ENCODE measurements at regions of chr14 and their contacts with region 1.

Region 1: GRCh38 chr14:77542421-77543239 is 44.0 kb upstream of the ISM2 start:
- DNase-seq: no peak
- ATAC-seq: peak in 7 of 8 donors; percentile 49 to 72 (median 67)
- H3K4me3 ChIP-seq: no peak overlapping the region
- H3K27ac ChIP-seq: peak overlapping the region in 7 of 10 donors; percentile 27 to 73 (median 46)
- H3K4me1 ChIP-seq: peaks cover 0 to 34% (median 15%) of the 10 kb centered on the region in 9 donors
- H3K27me3 ChIP-seq: no peaks in the 10 kb centered on the region
- CTCF ChIP-seq: no peak

Region 2: DNA sequence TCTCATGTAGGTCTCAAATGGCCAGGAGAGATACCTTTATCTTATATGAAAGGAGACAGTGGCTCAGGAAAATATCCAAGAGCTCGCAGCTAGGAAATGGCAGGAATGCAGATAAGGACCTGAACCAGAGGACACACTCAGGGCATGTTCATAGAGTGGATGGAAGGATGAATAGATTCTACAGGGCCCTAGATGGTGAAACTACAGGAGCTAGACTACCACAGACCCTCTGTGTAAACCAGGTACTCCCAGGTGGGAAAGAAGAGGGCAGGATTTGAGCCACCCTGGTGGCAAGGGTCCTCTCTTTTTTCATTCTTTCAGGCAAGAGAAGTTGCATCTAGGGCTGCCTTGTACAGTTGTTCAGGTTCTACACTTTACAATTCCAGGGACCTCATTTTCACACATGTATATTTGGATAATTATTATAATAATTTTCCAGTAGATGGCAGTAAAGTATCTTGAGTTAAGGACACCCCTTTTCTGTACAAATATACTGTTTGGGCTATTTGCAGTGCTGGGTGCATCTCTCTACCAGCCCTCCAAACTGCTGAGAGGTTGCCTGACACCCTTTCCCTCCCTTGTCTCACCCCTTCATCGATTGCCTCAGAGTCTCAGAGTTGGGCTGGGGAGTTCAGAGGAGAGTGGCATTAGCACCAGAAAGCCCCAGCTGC is 390.6 kb before region 1 on chr14:
- intact Hi-C with region 1: loop called in 1 of 10 experiments (anchors 10 kb)
- DNase-seq: no peak
- ATAC-seq: peak in 4 of 8 donors; percentile 25 to 57 (median 45)
- H3K4me3 ChIP-seq: no peak overlapping the region
- H3K27ac ChIP-seq: no peak overlapping the region
- H3K4me1 ChIP-seq: peaks cover 0 to 14% (median 0%) of the 10 kb centered on the region in 9 donors
- H3K27me3 ChIP-seq: peaks cover 0 to 45% (median 32%) of the 10 kb centered on the region in 7 donors
- CTCF ChIP-seq: peak in 5 of 9 donors; percentile 26 to 42 (median 31)

Region 3: DNA sequence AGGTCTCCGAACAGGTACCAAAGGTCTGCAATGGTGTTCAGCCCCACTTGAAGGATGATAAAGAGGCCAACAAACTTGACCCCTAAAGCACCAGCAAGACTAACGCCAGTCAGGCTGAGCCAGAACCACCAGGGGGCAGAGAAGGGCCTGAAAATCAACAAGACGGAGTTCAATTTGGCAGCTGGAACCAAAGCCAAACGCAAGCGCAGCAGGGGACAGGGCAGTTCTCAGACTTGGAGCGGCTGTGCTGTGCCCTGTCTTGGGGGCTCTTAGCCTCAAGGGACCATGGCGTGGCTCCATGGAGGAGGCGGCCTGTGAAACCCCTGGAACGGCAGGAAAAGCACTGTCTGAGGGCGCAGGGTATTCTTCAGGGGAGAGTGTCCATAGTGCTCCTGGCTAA is 241.5 kb before region 1 on chr14:
- intact Hi-C with region 1: loop called in 1 of 10 experiments (anchors 10 kb)
- DNase-seq: peak; percentile 56 to 69
- ATAC-seq: peak; percentile 28 to 78 (median 65)
- H3K4me3 ChIP-seq: no peak overlapping the region
- H3K27ac ChIP-seq: no peak overlapping the region
- H3K4me1 ChIP-seq: peaks cover 0 to 30% (median 0%) of the 10 kb centered on the region in 9 donors
- H3K27me3 ChIP-seq: no peaks in the 10 kb centered on the region
- CTCF ChIP-seq: peak; percentile 29 to 75 (median 60)

Region 4: GRCh38 chr14:77469539-77469938 is 73.1 kb before region 1 on chr14:
- intact Hi-C with region 1: loop called in 2 of 10 experiments (anchors 10 kb)
- DNase-seq: no peak
- ATAC-seq: no peak
- H3K4me3 ChIP-seq: no peak overlapping the region
- H3K27ac ChIP-seq: no peak overlapping the region
- H3K4me1 ChIP-seq: no peaks in the 10 kb centered on the region
- H3K27me3 ChIP-seq: peaks cover 0 to 1% (median 0%) of the 10 kb centered on the region in 7 donors
- CTCF ChIP-seq: no peak

Region 5: GRCh38 chr14:77507762-77508161 is 34.9 kb before region 1 on chr14:
- intact Hi-C with region 1: loop called in 1 of 10 experiments (anchors 2 kb)
- DNase-seq: no peak
- ATAC-seq: no peak
- H3K4me3 ChIP-seq: no peak overlapping the region
- H3K27ac ChIP-seq: no peak overlapping the region
- H3K4me1 ChIP-seq: no peaks in the 10 kb centered on the region
- H3K27me3 ChIP-seq: no peaks in the 10 kb centered on the region
- CTCF ChIP-seq: no peak

Region 6: GRCh38 chr14:77691259-77691658 is 148.6 kb after region 1 on chr14:
- intact Hi-C with region 1: no loop called
- DNase-seq: peak in 1 of 2 donors; percentile 62
- ATAC-seq: peak in 7 of 8 donors; percentile 83 to 96 (median 92)
- H3K4me3 ChIP-seq: no peak overlapping the region
- H3K27ac ChIP-seq: peak overlapping the region in 6 of 10 donors; percentile 0 to 57 (median 48)
- H3K4me1 ChIP-seq: no peaks in the 10 kb centered on the region
- H3K27me3 ChIP-seq: no peaks in the 10 kb centered on the region
- CTCF ChIP-seq: no peak